Endothelial cell of umbilical vein (primary cell): ENCODE measurements at regions of chr4 and their contacts with region 1.

Region 1: GRCh38 chr4:140037357-140038030 is 116.5 kb downstream of the MAML3 start:
- DNase-seq: peak; percentile 93
- H3K4me3 ChIP-seq: peak overlapping the region in 1 of 3 experiments; percentile 45
- H3K27ac ChIP-seq: peak overlapping the region; percentile 99
- H3K4me1 ChIP-seq: peaks cover 29% of the 10 kb centered on the region
- H3K27me3 ChIP-seq: no peaks in the 10 kb centered on the region
- CTCF ChIP-seq: no peak
- POLR2A ChIP-seq: peak; percentile 41

Region 2: GRCh38 chr4:139243448-139244365 is 793.8 kb before region 1 on chr4:
- CTCF ChIA-PET with region 1: no interaction called
- POLR2A ChIA-PET with region 1: no interaction called
- dilution Hi-C with region 1: no loop called
- intact Hi-C with region 1: no loop called
- DNase-seq: peak; percentile 72
- H3K4me3 ChIP-seq: no peak overlapping the region
- H3K27ac ChIP-seq: no peak overlapping the region
- H3K4me1 ChIP-seq: peaks cover 6% of the 10 kb centered on the region
- H3K27me3 ChIP-seq: no peaks in the 10 kb centered on the region
- CTCF ChIP-seq: no peak
- POLR2A ChIP-seq: no peak

Region 3: GRCh38 chr4:140078366-140078765 is 40.9 kb after region 1 on chr4:
- CTCF ChIA-PET with region 1: no interaction called
- POLR2A ChIA-PET with region 1: no interaction called
- dilution Hi-C with region 1: no loop called
- intact Hi-C with region 1: no loop called
- DNase-seq: no peak
- H3K4me3 ChIP-seq: no peak overlapping the region
- H3K27ac ChIP-seq: no peak overlapping the region
- H3K4me1 ChIP-seq: peaks cover 6% of the 10 kb centered on the region
- H3K27me3 ChIP-seq: no peaks in the 10 kb centered on the region
- CTCF ChIP-seq: no peak
- POLR2A ChIP-seq: no peak

Region 4: GRCh38 chr4:140090215-140090731 is 52.8 kb after region 1 on chr4:
- CTCF ChIA-PET with region 1: interaction called, 3 read pairs
- POLR2A ChIA-PET with region 1: no interaction called
- dilution Hi-C with region 1: no loop called
- intact Hi-C with region 1: loop called (anchors 1 kb)
- DNase-seq: peak; percentile 73
- H3K4me3 ChIP-seq: no peak overlapping the region
- H3K27ac ChIP-seq: peak overlapping the region; percentile 89
- H3K4me1 ChIP-seq: peaks cover 63% of the 10 kb centered on the region
- H3K27me3 ChIP-seq: no peaks in the 10 kb centered on the region
- CTCF ChIP-seq: no peak
- POLR2A ChIP-seq: peak; percentile 58